ENCODE measurements at regions of chr7 and their contacts with region 1.

Region 1: DNA sequence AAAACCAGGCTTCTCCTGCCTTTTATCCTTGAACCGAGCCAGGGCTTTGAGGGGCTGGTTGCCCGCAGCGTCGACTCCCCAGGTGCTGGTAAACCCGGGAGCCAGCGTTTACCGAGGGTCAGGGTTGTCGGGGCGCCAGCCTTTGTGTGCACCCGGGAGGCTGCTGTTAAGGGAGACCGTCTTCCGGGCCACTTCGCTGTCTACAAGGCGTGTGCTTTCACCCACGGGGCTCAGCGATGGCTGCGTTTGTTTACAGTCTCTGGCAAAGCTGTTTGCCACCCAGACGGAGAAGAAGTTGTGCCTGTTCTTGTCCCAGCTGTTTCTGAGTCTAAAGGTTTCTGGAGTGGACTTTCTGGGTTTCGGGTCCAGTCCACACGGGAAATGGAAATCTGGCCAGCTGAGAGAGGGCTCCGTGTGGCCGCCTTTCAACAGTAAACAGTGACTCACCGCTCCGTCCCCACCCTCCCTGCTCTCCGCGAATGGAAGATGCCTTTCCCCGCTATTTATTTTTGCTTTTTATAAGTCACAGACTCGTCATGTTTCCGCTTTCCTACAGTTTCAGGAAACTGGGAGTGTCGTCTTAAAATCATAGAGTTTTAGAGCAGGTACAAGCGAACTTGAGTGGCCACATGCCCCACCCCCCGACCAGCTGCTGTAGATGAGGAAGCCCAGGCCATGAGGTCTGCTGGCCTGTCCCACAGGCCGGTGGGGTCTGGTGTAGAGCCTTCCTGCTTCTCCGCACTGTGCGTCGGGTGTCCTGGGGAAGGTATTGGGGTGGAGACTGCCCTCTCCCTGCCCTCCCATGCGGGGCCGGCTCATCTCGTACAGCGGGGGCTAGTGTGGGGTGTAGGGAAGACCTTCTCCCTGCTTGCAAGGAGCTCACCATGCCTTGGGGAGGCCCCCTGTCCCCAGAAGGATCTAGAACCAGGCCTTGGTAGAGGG is 2.3 kb downstream of the MAFK start:
- DNase-seq: peak in 8 of 9 donors; percentile 57 to 70 (median 62)
- ATAC-seq: peak; percentile 52
- H3K4me3 ChIP-seq: peak overlapping the region; percentile 74
- H3K4me3 Mint-ChIP-seq: peak overlapping the region; percentile 87 to 94 (median 92)
- H3K27ac ChIP-seq: peak overlapping the region; percentile 90
- H3K27ac Mint-ChIP-seq: peak overlapping the region; percentile 92 to 99 (median 97)
- H3K4me1 ChIP-seq: peaks cover 7 to 10% of the 10 kb centered on the region in 2 donors
- H3K4me1 Mint-ChIP-seq: peaks cover 15 to 36% (median 21%) of the 10 kb centered on the region in 7 donors
- H3K27me3 ChIP-seq: no peaks in the 10 kb centered on the region
- H3K27me3 Mint-ChIP-seq: peaks cover 0 to 3% (median 0%) of the 10 kb centered on the region in 5 donors

Region 2: GRCh38 chr7:1020849-1021251 is 511.9 kb before region 1 on chr7:
- CTCF ChIA-PET with region 1: no interaction called
- POLR2A ChIA-PET with region 1: no interaction called
- intact Hi-C with region 1: no loop called
- DNase-seq: no peak
- ATAC-seq: no peak
- H3K4me3 ChIP-seq: no peak overlapping the region
- H3K4me3 Mint-ChIP-seq: no peak overlapping the region
- H3K27ac ChIP-seq: no peak overlapping the region
- H3K27ac Mint-ChIP-seq: no peak overlapping the region
- H3K4me1 ChIP-seq: no peaks in the 10 kb centered on the region
- H3K4me1 Mint-ChIP-seq: peaks cover 6 to 31% (median 9%) of the 10 kb centered on the region in 7 donors
- H3K27me3 ChIP-seq: no peaks in the 10 kb centered on the region
- H3K27me3 Mint-ChIP-seq: no peaks in the 10 kb centered on the region

Region 3: GRCh38 chr7:1044191-1045068 is 488.3 kb before region 1 on chr7 and contains the start of gene GPR146:
- CTCF ChIA-PET with region 1: no interaction called
- POLR2A ChIA-PET with region 1: no interaction called
- intact Hi-C with region 1: loop called in 1 of 2 experiments (anchors 5 kb)
- DNase-seq: peak; percentile 73 to 97 (median 86)
- ATAC-seq: peak; percentile 96
- H3K4me3 ChIP-seq: peak within 1 kb of the TSS; percentile 79
- H3K4me3 Mint-ChIP-seq: peak within 1 kb of the TSS; percentile 88 to 94 (median 91)
- H3K27ac ChIP-seq: peak within 1 kb of the TSS; percentile 83
- H3K27ac Mint-ChIP-seq: peak within 1 kb of the TSS; percentile 62 to 93 (median 85)
- H3K4me1 ChIP-seq: peaks cover 49 to 54% of the 10 kb centered on the region in 2 donors
- H3K4me1 Mint-ChIP-seq: peaks cover 42 to 75% (median 56%) of the 10 kb centered on the region in 7 donors
- H3K27me3 ChIP-seq: no peaks in the 10 kb centered on the region
- H3K27me3 Mint-ChIP-seq: peaks cover 0 to 13% (median 0%) of the 10 kb centered on the region in 5 donors
- total RNA-seq, gene GPR146: 10.1 to 26.5 (median 15.9) TPM

Region 4: DNA sequence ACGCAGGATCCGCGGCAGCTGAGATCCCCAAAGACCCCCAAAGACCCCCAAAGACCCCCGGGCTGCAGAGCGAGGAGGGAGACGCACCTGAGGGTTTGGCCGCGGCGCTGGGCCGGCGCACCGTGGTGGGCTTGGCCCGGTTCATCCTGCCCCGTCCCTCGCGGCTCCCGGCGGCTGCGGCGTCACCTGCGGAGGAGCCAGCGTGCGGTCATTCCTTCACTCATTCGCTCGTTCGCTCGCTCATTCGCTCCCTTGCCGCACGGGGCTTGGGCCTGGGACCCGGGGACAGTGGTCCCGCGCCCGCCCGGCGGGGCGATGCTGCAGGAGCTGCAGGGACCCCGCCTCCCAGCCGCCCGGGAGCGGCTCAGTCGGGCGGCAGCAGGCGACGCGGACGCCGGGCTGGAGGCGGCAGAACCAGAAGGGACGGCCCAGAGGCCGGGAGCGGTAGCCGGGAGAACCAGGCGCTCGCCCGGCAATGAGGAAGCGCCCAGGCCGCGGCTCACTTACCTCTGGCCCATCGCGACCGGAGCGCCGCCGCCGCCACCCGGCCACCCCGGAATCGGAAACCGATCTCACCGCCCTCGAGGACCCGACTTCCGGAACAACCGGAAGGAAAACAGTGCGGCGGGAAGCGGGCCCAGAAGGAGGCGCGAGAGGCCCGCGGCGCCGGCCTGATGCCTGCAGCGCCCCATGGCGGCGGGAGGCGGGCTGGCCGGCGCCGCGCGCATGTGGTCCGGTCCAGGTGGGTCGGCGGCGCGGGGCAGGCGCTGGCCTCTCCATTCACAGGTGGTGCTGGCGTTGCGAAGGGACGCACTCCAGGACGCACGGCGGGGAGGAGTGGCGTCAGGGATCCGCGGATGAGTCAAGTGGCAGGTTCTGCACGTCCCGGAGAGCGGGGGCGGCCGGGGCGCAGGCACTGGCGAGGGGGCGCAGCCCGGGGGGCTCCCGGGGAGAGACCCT is 28.7 kb before region 1 on chr7 and contains the start of gene INTS1:
- CTCF ChIA-PET with region 1: interaction called, 12 read pairs
- POLR2A ChIA-PET with region 1: interaction called, 12 read pairs
- intact Hi-C with region 1: loop called (anchors 1 kb)
- DNase-seq: peak; percentile 82 to 93 (median 88)
- ATAC-seq: peak; percentile 96
- H3K4me3 ChIP-seq: peak within 1 kb of the TSS; percentile 77
- H3K4me3 Mint-ChIP-seq: peak within 1 kb of the TSS; percentile 80 to 94 (median 87)
- H3K27ac ChIP-seq: peak within 1 kb of the TSS; percentile 77
- H3K27ac Mint-ChIP-seq: peak within 1 kb of the TSS in 8 of 9 donors; percentile 59 to 88 (median 77)
- H3K4me1 ChIP-seq: peaks cover 18 to 35% of the 10 kb centered on the region in 2 donors
- H3K4me1 Mint-ChIP-seq: peaks cover 35 to 60% (median 42%) of the 10 kb centered on the region in 7 donors
- H3K27me3 ChIP-seq: no peaks in the 10 kb centered on the region
- H3K27me3 Mint-ChIP-seq: peaks cover 0 to 4% (median 0%) of the 10 kb centered on the region in 5 donors
- total RNA-seq, gene INTS1: 82.0 to 157 (median 111) TPM

Region 5: DNA sequence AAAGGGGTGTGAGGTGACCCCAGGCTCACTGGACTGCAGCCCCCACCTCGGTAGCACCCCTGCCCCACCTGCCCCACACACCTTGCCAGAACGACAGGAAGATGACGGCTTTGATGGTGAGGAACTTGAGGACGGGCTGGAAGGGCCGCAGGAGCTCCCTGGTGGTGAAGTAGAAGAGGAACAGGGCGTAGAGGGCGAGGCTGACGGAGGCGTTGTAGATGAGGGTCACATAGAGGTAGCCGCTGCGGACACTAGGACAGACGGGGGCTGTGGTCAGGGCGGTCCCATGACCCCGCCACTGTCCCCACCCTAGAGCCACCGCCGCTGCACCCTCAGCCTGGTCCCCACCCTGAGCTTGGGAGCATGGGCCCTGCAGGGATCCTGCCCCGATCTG is 15.7 kb after region 1 on chr7:
- CTCF ChIA-PET with region 1: interaction called, 3 read pairs
- POLR2A ChIA-PET with region 1: no interaction called
- intact Hi-C with region 1: loop called in 1 of 2 experiments (anchors 2 kb)
- DNase-seq: no peak
- ATAC-seq: peak; percentile 26
- H3K4me3 ChIP-seq: no peak overlapping the region
- H3K4me3 Mint-ChIP-seq: no peak overlapping the region
- H3K27ac ChIP-seq: no peak overlapping the region
- H3K27ac Mint-ChIP-seq: peak overlapping the region in 2 of 9 donors; percentile 38 to 47
- H3K4me1 ChIP-seq: no peaks in the 10 kb centered on the region
- H3K4me1 Mint-ChIP-seq: peaks cover 0 to 8% (median 4%) of the 10 kb centered on the region in 7 donors
- H3K27me3 ChIP-seq: no peaks in the 10 kb centered on the region
- H3K27me3 Mint-ChIP-seq: no peaks in the 10 kb centered on the region

Region 6: DNA sequence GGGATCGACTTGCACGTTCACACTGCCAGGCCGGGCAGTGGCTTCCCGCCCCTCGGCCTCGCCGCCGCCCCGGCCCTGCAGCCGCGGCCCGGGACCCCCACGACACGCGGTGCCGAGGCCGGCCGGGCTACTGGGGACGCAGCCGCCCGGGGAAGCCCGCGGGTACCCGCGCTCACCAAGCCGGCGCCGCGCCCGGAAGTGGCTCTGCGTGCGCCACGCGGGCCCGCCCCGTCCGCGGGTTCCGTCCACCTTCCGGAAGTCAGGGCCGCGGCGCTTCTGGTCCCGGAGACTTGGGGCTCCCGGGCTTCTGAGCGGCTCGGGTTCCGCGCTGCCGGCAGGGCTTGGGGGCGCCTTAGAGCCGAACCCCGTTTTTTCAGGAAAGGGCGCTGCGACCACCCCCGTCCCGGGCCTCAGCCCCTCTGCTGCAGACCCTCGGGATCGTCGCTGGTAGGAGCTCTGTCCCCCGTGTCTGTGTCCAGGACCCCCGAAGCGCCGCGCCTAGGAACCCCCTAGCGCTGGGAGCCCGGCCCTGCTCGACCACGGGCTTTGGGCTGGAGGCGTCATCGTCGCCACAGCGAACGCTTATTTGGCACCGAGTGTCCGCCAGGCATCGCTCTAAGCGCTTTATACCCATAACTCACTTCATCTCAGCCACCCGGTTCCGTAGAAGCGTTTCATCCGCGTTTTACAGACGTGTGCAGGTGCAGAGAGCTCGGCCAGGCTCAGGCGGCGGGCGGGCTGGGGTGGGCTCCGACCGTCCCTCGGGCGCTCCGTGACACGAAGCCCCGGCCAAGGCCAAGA is 37.3 kb after region 1 on chr7 and contains the start of gene PSMG3:
- CTCF ChIA-PET with region 1: no interaction called
- POLR2A ChIA-PET with region 1: interaction called, 5 read pairs
- intact Hi-C with region 1: loop called (anchors 1 kb)
- DNase-seq: peak; percentile 72 to 91 (median 84)
- ATAC-seq: peak; percentile 94
- H3K4me3 ChIP-seq: peak within 1 kb of the TSS; percentile 90
- H3K4me3 Mint-ChIP-seq: peak within 1 kb of the TSS; percentile 77 to 91 (median 86)
- H3K27ac ChIP-seq: peak within 1 kb of the TSS; percentile 95
- H3K27ac Mint-ChIP-seq: peak within 1 kb of the TSS; percentile 81 to 93 (median 88)
- H3K4me1 ChIP-seq: peaks cover 3 to 16% of the 10 kb centered on the region in 2 donors
- H3K4me1 Mint-ChIP-seq: peaks cover 14 to 36% (median 26%) of the 10 kb centered on the region in 7 donors
- H3K27me3 ChIP-seq: no peaks in the 10 kb centered on the region
- H3K27me3 Mint-ChIP-seq: no peaks in the 10 kb centered on the region
- total RNA-seq, gene PSMG3: 12.1 to 31.8 (median 23.2) TPM

Region 7: DNA sequence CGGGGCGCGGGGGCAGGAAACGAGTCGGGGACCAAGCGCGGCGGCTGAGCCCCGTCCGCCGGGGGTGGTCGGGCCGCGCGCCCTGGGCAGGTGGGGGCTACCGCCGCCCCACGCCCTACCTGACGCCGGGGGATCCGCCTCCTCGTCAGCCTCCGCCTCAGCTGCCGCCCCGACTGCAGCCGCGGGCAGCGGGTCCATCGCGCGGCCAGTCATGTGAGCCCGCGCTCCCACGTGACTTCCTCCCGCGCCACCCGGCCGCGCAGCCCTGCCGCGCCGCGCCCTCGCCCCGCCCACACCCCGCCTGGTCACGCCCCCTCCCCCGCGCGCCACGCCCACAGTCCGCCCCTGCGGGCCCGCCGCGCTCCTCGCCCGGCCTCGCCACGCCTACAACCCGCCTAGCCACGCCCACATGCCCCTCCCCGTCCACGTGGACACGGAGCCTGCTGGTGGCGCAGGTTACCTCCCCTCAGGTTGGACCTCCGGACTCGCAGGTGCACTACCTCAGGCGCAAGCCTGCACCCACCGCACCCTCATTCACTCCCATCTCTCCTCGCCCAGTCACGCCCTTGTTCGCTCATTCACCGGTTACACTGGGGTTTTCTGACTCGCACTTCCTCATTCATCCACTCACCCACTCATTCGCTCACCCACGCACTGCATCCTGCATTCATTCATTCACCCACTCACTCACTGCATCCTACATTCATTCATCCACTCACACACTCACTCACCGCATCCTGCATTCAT is 781.6 kb after region 1 on chr7 and contains the start of gene SNX8:
- CTCF ChIA-PET with region 1: no interaction called
- POLR2A ChIA-PET with region 1: no interaction called
- intact Hi-C with region 1: loop called in 1 of 2 experiments (anchors 1 kb)
- DNase-seq: peak; percentile 91 to 99 (median 94)
- ATAC-seq: peak; percentile 98
- H3K4me3 ChIP-seq: peak within 1 kb of the TSS; percentile 59
- H3K4me3 Mint-ChIP-seq: peak within 1 kb of the TSS in 7 of 10 donors; percentile 87 to 96 (median 93)
- H3K27ac ChIP-seq: peak within 1 kb of the TSS; percentile 60
- H3K27ac Mint-ChIP-seq: peak within 1 kb of the TSS; percentile 62 to 89 (median 88)
- H3K4me1 ChIP-seq: no peaks in the 10 kb centered on the region
- H3K4me1 Mint-ChIP-seq: peaks cover 0 to 19% (median 15%) of the 10 kb centered on the region in 7 donors
- H3K27me3 ChIP-seq: no peaks in the 10 kb centered on the region
- H3K27me3 Mint-ChIP-seq: no peaks in the 10 kb centered on the region
- total RNA-seq, gene SNX8: 4.7 to 31.5 (median 9.4) TPM

Region 8: DNA sequence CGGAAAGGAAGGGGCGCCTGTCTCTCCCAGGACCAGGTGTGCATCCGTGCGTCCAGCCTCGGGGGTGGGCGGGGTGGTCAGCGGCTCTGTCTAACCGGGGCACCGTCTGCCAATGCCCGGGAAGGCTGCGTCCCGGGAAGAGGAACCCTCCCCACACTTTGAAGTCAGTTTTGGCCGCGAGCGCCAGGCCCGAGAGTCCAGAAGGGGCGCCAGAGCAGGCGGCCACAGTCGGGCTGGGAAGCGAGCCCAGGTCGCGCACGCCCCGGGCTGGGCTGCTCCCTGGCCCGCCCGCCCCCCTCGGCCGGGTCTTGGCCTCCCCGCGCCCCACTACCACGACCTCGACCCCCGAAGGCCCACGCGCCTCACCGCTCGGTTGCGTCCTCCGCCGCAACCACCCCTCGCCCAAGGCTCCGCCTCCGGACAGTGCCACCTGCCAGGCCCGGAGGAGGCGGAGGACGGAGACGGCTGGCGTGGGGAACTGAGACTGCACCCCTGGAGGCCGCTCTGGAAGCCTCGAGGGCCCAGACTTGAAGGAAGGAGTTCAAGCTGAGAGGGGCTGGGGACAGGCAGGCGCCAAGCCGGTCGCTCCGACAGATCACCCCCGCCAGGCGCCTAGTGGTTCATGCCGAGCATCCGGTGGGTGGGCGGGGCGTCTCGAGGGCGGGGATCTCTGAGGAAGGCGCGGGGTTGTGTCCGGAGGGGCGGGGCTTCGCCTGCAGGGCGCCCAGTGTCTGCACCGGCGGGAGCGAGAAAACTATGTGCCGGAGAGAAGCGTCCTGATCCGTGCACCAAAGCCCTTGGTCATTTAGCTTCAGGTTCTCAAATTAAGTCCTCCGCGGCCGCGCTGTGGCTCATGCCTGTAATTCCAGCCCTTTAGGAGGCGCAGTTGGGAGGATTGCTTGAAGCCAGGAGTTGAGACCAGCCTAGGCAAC is 1022.6 kb after region 1 on chr7 and contains the start of gene BRAT1:
- CTCF ChIA-PET with region 1: no interaction called
- POLR2A ChIA-PET with region 1: no interaction called
- intact Hi-C with region 1: loop called in 1 of 2 experiments (anchors 10 kb)
- DNase-seq: peak; percentile 84 to 95 (median 92)
- ATAC-seq: peak; percentile 95
- H3K4me3 ChIP-seq: peak within 1 kb of the TSS; percentile 77
- H3K4me3 Mint-ChIP-seq: peak within 1 kb of the TSS; percentile 77 to 92 (median 88)
- H3K27ac ChIP-seq: peak within 1 kb of the TSS; percentile 100
- H3K27ac Mint-ChIP-seq: peak within 1 kb of the TSS; percentile 48 to 93 (median 85)
- H3K4me1 ChIP-seq: peaks cover 15 to 22% of the 10 kb centered on the region in 2 donors
- H3K4me1 Mint-ChIP-seq: peaks cover 22 to 50% (median 36%) of the 10 kb centered on the region in 7 donors
- H3K27me3 ChIP-seq: no peaks in the 10 kb centered on the region
- H3K27me3 Mint-ChIP-seq: no peaks in the 10 kb centered on the region
- total RNA-seq, gene BRAT1: 24.6 to 45.5 (median 37.0) TPM